ENCODE measurements at regions of chr6 and their contacts with region 1.

Region 1: DNA sequence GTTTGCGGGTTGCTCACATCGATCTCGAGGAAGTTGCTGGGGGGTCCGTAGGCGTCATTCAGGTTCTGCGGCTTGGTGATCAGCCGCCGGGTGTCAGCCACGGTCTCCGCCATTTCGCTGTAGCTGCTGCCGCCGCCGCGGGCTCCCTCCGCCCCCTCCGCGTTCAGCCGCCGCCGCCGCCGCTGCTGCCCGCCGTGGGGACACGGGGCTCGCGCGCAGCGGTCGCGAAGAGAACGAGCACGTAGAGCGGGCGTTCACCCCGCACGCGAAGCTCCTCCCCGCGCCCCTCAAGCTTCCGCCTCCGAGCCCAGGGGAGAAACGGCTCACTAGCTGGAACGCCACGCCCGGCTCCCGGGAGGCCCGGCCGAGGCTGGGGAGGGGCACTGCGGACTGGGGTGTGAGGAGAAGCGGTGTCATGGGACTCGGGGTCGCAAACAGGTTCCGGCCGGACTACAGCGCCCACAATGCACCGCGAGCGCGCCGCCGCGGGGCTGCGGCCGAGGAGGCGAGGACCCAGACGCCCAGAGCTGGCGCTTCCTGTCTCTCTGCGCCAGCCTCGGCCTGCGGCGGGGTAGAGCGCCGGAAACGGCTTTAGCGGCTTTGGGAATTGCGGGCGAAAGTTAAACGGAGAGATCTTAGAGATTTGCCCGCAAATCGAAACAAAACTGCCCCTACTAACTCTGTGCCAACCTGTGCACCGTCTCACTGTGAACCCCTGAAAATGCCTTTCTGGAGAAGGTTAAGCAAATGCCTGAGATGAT is at the start of gene SNX3:
- DNase-seq: peak; percentile 90
- H3K4me3 Mint-ChIP-seq: peak within 1 kb of the TSS; percentile 77
- H3K27ac Mint-ChIP-seq: peak within 1 kb of the TSS; percentile 89
- H3K4me1 Mint-ChIP-seq: peaks cover 19% of the 10 kb centered on the region
- H3K27me3 Mint-ChIP-seq: no peaks in the 10 kb centered on the region
- total RNA-seq, gene SNX3: 59.9 to 65.7 TPM

Region 2: GRCh38 chr6:107033126-107033525 is 1227.9 kb before region 1 on chr6:
- CTCF ChIA-PET with region 1: no interaction called
- intact Hi-C with region 1: loop called (anchors 1 kb)
- DNase-seq: no peak
- H3K4me3 Mint-ChIP-seq: no peak overlapping the region
- H3K27ac Mint-ChIP-seq: no peak overlapping the region
- H3K4me1 Mint-ChIP-seq: peaks cover 42% of the 10 kb centered on the region
- H3K27me3 Mint-ChIP-seq: no peaks in the 10 kb centered on the region

Region 3: GRCh38 chr6:108074359-108075144 is 186.4 kb before region 1 on chr6 and contains the start of gene OSTM1:
- CTCF ChIA-PET with region 1: no interaction called
- intact Hi-C with region 1: loop called (anchors 1 kb)
- DNase-seq: peak; percentile 93
- H3K4me3 Mint-ChIP-seq: peak within 1 kb of the TSS; percentile 80
- H3K27ac Mint-ChIP-seq: peak within 1 kb of the TSS; percentile 78
- H3K4me1 Mint-ChIP-seq: peaks cover 30% of the 10 kb centered on the region
- H3K27me3 Mint-ChIP-seq: no peaks in the 10 kb centered on the region
- total RNA-seq, gene OSTM1: 7.1 to 7.5 TPM

Region 4: GRCh38 chr6:108222504-108222903 is 38.5 kb before region 1 on chr6:
- CTCF ChIA-PET with region 1: no interaction called
- intact Hi-C with region 1: no loop called
- DNase-seq: no peak
- H3K4me3 Mint-ChIP-seq: no peak overlapping the region
- H3K27ac Mint-ChIP-seq: no peak overlapping the region
- H3K4me1 Mint-ChIP-seq: peaks cover 8% of the 10 kb centered on the region
- H3K27me3 Mint-ChIP-seq: no peaks in the 10 kb centered on the region

Region 5: DNA sequence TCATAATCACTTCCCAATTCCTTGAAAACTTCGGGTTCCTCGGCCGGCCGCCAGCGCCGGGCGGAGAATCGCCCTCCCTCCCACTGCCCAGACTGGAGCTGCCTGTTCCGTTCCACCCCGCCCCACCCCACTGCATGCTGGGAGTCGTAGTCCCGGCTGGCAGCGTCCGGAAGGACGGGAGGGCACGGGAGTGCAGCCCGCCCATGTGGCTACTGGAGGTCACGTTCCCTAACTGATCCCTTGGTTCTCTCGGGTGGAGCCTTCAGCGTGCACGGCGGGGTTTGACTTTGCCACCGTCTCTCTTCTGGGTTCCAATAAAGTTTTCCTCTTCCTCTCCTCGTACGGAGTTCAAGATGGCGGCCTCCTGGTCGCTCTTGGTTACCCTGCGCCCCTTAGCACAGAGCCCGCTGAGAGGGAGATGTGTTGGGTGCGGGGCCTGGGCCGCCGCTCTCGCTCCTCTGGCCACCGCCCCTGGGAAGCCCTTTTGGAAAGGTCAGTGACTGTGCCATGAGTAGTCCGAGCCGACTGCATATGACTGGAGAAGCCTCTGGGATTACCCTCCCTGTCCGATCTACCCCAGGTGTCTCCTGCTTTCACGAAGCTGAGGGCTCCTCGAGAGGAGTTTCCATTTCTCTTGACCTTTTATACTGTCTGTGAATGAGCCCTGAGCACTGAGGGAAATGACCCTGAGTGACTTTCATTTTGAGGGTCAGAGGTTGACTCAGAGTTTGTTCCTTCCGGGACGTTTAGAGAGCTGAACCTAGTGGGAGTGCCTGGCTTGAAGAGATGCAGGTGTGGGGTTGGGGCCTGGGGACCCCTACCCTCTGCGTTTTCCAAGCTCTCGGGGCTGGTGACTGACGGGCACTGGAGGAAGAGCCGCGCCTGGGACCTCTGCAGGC is 34.0 kb after region 1 on chr6 and contains the start of gene AFG1L:
- CTCF ChIA-PET with region 1: interaction called, 3 read pairs
- intact Hi-C with region 1: loop called (anchors 1 kb)
- DNase-seq: peak; percentile 91
- H3K4me3 Mint-ChIP-seq: peak within 1 kb of the TSS; percentile 99
- H3K27ac Mint-ChIP-seq: peak within 1 kb of the TSS; percentile 100
- H3K4me1 Mint-ChIP-seq: peaks cover 19% of the 10 kb centered on the region
- H3K27me3 Mint-ChIP-seq: no peaks in the 10 kb centered on the region
- total RNA-seq, gene AFG1L: 5.4 to 5.9 TPM

Region 6: DNA sequence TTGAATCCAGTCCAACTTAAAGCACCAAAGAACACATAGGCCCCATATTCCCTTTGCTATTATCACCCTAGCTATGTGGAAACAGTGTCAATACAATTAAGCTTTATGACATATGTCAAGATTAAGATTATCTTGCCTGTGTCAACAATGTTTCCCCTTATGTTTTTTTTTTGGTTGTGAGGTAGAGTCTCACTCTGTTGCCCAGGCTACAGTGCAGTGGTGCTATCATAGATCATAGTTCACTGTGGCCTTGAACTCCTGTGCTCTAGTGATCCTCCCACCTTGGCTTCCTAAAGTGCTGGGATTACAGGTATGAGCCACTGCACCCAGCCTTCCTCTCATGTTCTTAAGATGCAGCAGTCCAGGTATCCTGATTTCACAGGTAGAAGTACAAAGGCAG is 51.6 kb after region 1 on chr6:
- CTCF ChIA-PET with region 1: no interaction called
- intact Hi-C with region 1: no loop called
- DNase-seq: no peak
- H3K4me3 Mint-ChIP-seq: no peak overlapping the region
- H3K27ac Mint-ChIP-seq: no peak overlapping the region
- H3K4me1 Mint-ChIP-seq: no peaks in the 10 kb centered on the region
- H3K27me3 Mint-ChIP-seq: no peaks in the 10 kb centered on the region

Region 7: DNA sequence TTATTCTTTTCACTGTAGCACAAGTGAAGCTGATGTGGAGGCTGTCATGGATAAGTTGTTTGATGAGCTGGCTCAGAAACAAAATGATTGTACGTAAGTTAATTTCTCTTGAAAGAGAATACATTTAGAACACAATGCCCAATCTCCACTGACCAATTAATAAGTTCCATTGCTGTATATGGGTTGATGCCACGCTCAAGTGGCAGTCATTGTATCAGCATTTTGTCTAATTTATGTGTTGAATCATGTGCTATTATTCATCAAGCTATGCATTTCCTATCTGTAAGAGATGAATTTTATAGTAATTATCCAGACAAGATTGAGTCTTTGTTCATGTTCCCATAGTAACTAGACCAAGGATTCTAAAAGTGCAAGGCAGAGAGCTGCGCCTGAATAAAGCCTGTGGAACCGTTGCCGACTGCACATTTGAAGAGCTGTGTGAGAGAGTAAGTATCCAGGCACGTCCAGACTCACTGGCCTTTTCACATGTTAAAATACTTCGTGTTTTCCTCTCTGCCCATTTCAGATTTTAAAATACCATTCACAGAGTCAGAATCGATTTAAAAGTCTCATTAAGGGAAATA is 215.9 kb after region 1 on chr6:
- CTCF ChIA-PET with region 1: no interaction called
- intact Hi-C with region 1: no loop called
- DNase-seq: no peak
- H3K4me3 Mint-ChIP-seq: no peak overlapping the region
- H3K27ac Mint-ChIP-seq: no peak overlapping the region
- H3K4me1 Mint-ChIP-seq: peaks cover 3% of the 10 kb centered on the region
- H3K27me3 Mint-ChIP-seq: peaks cover 6% of the 10 kb centered on the region

Region 8: GRCh38 chr6:108492131-108492766 is 231.3 kb after region 1 on chr6:
- CTCF ChIA-PET with region 1: interaction called, 3 read pairs
- intact Hi-C with region 1: loop called (anchors 1 kb)
- DNase-seq: no peak
- H3K4me3 Mint-ChIP-seq: no peak overlapping the region
- H3K27ac Mint-ChIP-seq: no peak overlapping the region
- H3K4me1 Mint-ChIP-seq: no peaks in the 10 kb centered on the region
- H3K27me3 Mint-ChIP-seq: peaks cover 2% of the 10 kb centered on the region

Region 9: DNA sequence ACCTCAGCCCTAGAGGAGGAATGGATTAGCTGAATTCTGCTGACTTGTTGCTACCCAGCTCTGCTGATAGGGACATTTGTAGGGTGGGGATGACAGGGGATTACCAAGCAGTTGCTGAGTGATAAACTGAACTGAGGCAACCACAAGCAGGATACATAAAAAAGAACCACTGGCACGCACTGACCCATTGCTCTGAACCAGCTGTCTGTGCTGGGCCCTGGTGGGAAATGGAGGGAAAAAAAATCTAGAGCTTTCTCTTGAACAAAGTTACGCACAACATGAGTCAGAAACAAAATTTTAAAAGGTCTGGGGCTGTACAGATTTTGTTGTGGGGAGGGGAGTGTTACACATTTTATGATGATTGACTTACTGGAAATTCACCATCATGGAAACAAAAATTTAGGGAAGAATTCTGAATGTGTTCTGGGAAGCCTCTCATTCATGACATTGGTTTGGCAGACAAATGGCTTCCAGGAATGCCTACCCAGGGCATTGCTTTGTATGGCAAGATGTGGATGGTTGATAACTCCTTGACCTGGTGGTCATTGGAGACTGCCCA is 337.4 kb after region 1 on chr6:
- CTCF ChIA-PET with region 1: no interaction called
- intact Hi-C with region 1: no loop called
- DNase-seq: peak; percentile 37
- H3K4me3 Mint-ChIP-seq: no peak overlapping the region
- H3K27ac Mint-ChIP-seq: peak overlapping the region; percentile 0
- H3K4me1 Mint-ChIP-seq: peaks cover 12% of the 10 kb centered on the region
- H3K27me3 Mint-ChIP-seq: no peaks in the 10 kb centered on the region